Gastrocnemius medialis (tissue), 4 donors: ENCODE measurements at regions of chr11 and their contacts with region 1.

Region 1: DNA sequence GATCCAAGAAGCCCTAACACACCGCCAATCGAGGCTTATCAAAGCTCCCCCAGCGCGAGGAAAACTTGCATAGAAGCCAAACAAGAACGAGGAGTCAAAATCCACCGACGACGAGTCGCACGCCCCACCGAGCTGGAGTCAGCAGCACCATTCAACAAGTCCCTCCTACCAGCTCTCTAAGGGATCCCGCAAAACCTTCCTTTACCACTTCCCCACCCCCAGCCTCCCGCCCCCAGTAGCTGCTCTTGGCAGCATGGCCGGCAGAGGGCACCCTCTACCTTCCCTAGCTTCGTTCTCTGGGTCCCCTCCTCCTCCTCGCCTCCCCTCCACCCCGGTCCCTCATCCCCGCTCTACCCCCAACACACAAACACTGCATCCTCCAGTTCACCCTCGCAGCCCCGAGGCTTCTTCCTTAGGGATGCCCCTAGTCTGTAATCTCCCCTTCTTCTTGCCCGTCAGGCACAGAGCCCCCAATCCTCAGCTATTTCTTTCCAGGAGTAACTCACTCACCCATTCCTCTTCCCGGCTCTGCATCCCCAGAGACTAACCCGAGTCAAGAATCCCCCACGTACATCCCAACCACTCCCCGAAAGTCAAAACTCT is 1.3 kb downstream of the BDNF start:
- DNase-seq: peak in 1 of 2 donors; percentile 44
- ATAC-seq: peak; percentile 70 to 75
- H3K4me3 ChIP-seq: peak overlapping the region; percentile 58 to 63 (median 60)
- H3K27ac ChIP-seq: no peak overlapping the region
- H3K4me1 ChIP-seq: peaks cover 13 to 20% of the 10 kb centered on the region in 2 donors
- H3K27me3 ChIP-seq: peaks cover 0 to 34% (median 22%) of the 10 kb centered on the region in 3 donors
- CTCF ChIP-seq: peak in 4 of 5 experiments; percentile 19 to 86 (median 59)
- POLR2A ChIP-seq: no peak

Region 2: DNA sequence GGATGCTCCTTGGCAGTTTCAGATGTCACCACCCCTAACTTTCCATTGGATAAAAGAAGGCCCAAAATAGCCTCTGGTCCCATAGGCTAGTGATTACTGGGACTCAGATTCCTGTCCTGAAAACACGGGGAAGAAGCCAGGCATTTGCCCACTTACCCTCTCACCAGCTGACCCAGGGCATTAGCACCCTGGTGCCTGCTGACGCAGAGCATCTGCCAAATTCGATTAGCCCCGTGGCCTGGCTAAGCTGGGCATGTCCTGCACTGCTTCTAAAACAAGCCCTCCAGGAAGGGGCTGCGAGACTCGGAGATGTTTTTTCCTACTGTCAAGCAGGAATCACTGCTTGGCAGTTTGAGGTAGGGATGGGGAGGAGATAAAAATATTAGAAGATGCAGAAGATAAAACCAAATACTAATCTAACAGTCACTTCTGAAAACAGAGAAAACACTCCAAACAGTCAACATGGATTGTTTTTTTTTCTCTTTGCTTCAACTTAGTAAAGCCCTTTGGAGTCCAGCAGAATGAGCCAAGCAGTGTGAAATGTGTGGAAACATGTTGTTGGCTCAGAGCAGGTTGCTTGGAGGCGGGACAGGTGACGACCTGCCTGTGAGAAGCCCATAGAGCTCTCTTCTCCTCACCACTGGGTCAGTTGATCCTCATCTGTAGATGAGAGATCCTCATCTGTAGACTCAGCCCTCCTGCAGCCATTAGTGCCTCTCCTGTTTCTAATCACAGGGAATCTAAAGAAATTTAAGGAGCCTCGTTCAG is 52.7 kb before region 1 on chr11:
- in situ Hi-C with region 1: no loop called
- intact Hi-C with region 1: loop called (anchors 5 kb)
- DNase-seq: peak in 1 of 2 donors; percentile 15
- ATAC-seq: peak; percentile 58 to 84
- H3K4me3 ChIP-seq: peak overlapping the region in 2 of 4 donors; percentile 9 to 22
- H3K27ac ChIP-seq: peak overlapping the region; percentile 21 to 64 (median 39)
- H3K4me1 ChIP-seq: peaks cover 4 to 17% of the 10 kb centered on the region in 2 donors
- H3K27me3 ChIP-seq: no peaks in the 10 kb centered on the region
- CTCF ChIP-seq: no peak
- POLR2A ChIP-seq: no peak

Region 3: DNA sequence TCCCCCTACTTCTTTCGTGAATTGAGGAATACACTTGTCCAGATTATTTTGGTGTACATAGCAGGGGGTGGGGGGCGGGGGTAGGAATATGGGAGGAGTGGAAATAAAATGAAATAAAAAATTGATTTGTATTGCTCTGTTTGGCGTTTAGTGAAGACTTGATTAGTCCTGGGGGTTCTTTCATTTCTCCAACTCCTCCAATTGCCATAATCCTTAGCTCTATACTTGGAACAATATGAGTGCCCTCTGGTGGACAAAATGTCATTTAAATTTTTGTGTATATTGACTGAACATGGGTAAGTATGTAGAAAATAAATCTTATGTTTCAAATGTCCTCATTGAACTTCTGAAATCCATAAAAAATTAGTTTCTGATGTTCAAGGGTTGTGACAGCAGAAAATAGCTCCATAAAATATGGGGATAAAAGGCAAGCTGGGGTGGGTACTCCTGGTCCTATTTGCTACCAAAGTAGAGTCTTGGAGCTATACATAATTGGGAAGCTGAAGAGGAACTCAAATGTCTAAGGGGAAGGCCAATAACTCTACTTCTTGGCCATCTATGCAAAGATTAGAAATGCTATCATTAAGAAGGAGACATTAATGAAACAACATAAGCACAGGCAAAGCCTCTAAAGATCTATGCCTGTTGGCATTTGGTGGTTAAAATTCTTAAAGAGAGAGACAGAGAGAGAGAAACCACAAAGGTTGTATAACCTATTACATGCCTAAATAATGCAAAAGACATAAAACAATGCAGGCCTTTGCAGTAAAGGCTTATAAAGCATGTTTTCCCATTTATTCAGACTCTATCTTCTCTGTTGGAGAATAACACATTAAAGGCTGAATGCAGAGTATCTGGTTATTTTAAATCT is 830.8 kb after region 1 on chr11:
- in situ Hi-C with region 1: loop called in 2 of 4 experiments (anchors 25 kb)
- intact Hi-C with region 1: loop called (anchors 2 kb)
- DNase-seq: no peak
- ATAC-seq: no peak
- H3K4me3 ChIP-seq: no peak overlapping the region
- H3K27ac ChIP-seq: no peak overlapping the region
- H3K4me1 ChIP-seq: no peaks in the 10 kb centered on the region
- H3K27me3 ChIP-seq: no peaks in the 10 kb centered on the region
- CTCF ChIP-seq: peak in 2 of 5 experiments; percentile 23 to 36
- POLR2A ChIP-seq: no peak

Region 4: DNA sequence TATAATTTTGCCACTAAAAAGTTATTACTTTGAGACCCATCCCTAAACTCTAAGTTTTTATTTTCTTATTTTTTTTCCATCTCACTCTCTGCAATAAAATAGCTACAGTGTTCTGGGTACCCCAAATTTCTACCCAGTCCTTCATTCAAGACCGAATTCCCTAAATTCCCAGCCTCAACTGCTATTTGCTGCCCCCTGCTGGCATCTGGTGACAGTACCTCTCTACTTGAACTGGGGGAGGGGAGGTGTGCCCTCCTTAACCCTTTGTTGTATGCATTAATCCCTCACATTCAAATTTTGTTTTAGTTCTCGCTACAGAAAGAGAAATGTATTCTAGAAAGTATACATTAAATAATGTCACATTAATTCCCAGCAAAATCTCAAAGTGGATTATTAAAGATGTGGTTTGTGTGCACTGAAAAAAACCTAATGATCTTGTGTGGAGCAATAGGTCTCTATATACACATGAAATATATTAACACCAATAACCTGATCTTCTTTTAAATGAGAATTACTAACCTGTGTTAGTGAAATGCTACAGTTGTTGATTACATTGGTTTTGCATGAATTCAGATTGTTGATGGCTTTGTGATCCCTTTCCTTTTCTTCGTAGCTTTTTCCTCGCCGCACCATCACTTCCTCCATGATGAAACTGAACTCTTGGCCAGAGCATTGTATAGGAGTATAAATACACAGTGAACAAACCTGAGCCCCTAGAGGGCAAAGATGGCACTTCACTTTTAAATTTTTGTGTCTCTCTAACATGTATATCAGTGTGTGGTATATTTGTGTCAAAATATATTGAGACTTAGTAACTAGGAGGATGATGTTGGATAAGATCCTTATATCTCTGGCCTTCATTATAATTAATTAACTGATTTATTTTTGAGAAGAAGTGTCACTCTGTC is 999.2 kb after region 1 on chr11:
- in situ Hi-C with region 1: no loop called
- intact Hi-C with region 1: loop called (anchors 2 kb)
- DNase-seq: peak in 1 of 2 donors; percentile 3
- ATAC-seq: no peak
- H3K4me3 ChIP-seq: no peak overlapping the region
- H3K27ac ChIP-seq: no peak overlapping the region
- H3K4me1 ChIP-seq: no peaks in the 10 kb centered on the region
- H3K27me3 ChIP-seq: no peaks in the 10 kb centered on the region
- CTCF ChIP-seq: peak in 4 of 5 experiments; percentile 44 to 64 (median 54)
- POLR2A ChIP-seq: no peak

Region 5: GRCh38 chr11:29333993-29334775 is 1635.2 kb after region 1 on chr11:
- in situ Hi-C with region 1: no loop called
- intact Hi-C with region 1: loop called (anchors 5 kb)
- DNase-seq: no peak
- ATAC-seq: peak in 1 of 2 donors; percentile 71
- H3K4me3 ChIP-seq: no peak overlapping the region
- H3K27ac ChIP-seq: no peak overlapping the region
- H3K4me1 ChIP-seq: no peaks in the 10 kb centered on the region
- H3K27me3 ChIP-seq: no peaks in the 10 kb centered on the region
- CTCF ChIP-seq: peak in 2 of 5 experiments; percentile 4 to 33
- POLR2A ChIP-seq: no peak